OCI-LY7 (cell line): ENCODE measurements at regions of chr3 and their contacts with region 1.

Region 1: GRCh38 chr3:114152519-114153151 is 26.2 kb downstream of the DRD3 start:
- DNase-seq: peak; percentile 82
- H3K4me3 ChIP-seq: peak overlapping the region; percentile 23
- H3K27ac ChIP-seq: no peak overlapping the region
- H3K4me1 ChIP-seq: peaks cover 6% of the 10 kb centered on the region
- CTCF ChIP-seq: peak; percentile 97

Region 2: GRCh38 chr3:113736548-113737089 is 416.0 kb before region 1 on chr3:
- CTCF ChIA-PET with region 1: no interaction called
- POLR2A ChIA-PET with region 1: no interaction called
- intact Hi-C with region 1: loop called (anchors 2 kb)
- DNase-seq: peak; percentile 77
- H3K4me3 ChIP-seq: no peak overlapping the region
- H3K27ac ChIP-seq: peak overlapping the region; percentile 59
- H3K4me1 ChIP-seq: peaks cover 49% of the 10 kb centered on the region
- CTCF ChIP-seq: peak; percentile 88

Region 3: DNA sequence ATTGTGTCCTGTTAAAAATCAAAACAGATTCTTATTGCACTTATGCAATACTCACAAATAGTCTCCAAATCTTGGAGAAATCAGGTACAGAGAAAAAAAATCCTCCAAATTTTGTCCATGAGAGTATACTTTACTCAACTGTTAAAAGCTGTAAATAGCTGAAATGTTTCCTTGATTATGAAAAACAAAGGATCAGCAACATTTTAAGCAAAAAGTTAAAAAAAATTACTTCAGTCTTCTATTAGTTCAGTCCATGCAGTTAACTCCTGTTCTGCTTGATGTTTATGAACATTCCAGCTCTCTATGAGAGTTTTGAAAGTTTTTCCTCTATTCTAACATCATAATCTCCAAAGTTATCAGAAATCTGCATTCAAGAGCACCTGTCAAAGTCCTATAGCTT is 107.5 kb after region 1 on chr3:
- CTCF ChIA-PET with region 1: no interaction called
- POLR2A ChIA-PET with region 1: no interaction called
- intact Hi-C with region 1: loop called (anchors 10 kb)
- DNase-seq: no peak
- H3K4me3 ChIP-seq: no peak overlapping the region
- H3K27ac ChIP-seq: no peak overlapping the region
- H3K4me1 ChIP-seq: no peaks in the 10 kb centered on the region
- CTCF ChIP-seq: no peak

Region 4: GRCh38 chr3:114336122-114336697 is 183.6 kb after region 1 on chr3:
- CTCF ChIA-PET with region 1: no interaction called
- POLR2A ChIA-PET with region 1: no interaction called
- intact Hi-C with region 1: loop called (anchors 10 kb)
- DNase-seq: peak; percentile 9
- H3K4me3 ChIP-seq: no peak overlapping the region
- H3K27ac ChIP-seq: no peak overlapping the region
- H3K4me1 ChIP-seq: peaks cover 10% of the 10 kb centered on the region
- CTCF ChIP-seq: peak; percentile 81

Region 5: GRCh38 chr3:114418724-114419543 is 266.3 kb after region 1 on chr3:
- CTCF ChIA-PET with region 1: no interaction called
- POLR2A ChIA-PET with region 1: no interaction called
- intact Hi-C with region 1: loop called (anchors 2 kb)
- DNase-seq: peak; percentile 72
- H3K4me3 ChIP-seq: no peak overlapping the region
- H3K27ac ChIP-seq: no peak overlapping the region
- H3K4me1 ChIP-seq: no peaks in the 10 kb centered on the region
- CTCF ChIP-seq: peak; percentile 95